ENCODE measurements at regions of chr13 and their contacts with region 1.

Region 1: DNA sequence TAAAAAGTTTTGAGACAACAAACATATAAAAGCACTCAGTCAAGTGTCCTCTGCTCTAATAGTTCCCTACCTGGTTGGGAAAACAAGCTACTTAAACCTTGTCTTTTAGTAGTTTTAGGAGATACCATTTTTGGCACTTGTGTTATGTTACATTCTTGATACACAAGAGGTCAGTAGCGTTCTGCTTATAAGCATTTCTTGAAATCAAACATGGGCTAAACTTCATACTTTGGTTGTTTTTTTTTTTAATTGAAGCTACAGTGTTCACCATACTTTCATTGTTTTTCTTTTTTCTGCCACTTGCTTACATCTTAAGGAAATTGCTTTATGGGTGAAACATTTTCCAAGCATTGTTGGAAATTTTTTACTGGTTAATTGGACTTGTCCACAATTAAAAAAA is 12.9 kb downstream of the NHLRC3 start:
- DNase-seq: no peak
- ATAC-seq: peak in 1 of 4 donors; percentile 41
- H3K4me3 ChIP-seq: no peak overlapping the region
- H3K27ac ChIP-seq: no peak overlapping the region
- H3K4me1 ChIP-seq: no peaks in the 10 kb centered on the region
- H3K27me3 ChIP-seq: no peaks in the 10 kb centered on the region
- CTCF ChIP-seq: peak; percentile 18 to 73 (median 55)
- POLR2A ChIP-seq: no peak

Region 2: GRCh38 chr13:38933777-38934176 is 117.4 kb before region 1 on chr13:
- intact Hi-C with region 1: no loop called
- DNase-seq: no peak
- ATAC-seq: no peak
- H3K4me3 ChIP-seq: no peak overlapping the region
- H3K27ac ChIP-seq: no peak overlapping the region
- H3K4me1 ChIP-seq: no peaks in the 10 kb centered on the region
- H3K27me3 ChIP-seq: peaks cover 0 to 6% (median 0%) of the 10 kb centered on the region in 9 donors
- CTCF ChIP-seq: no peak
- POLR2A ChIP-seq: no peak

Region 3: GRCh38 chr13:39144941-39145533 is 93.9 kb after region 1 on chr13:
- intact Hi-C with region 1: loop called in 1 of 10 experiments (anchors 10 kb)
- DNase-seq: peak in 4 of 5 donors; percentile 47 to 65 (median 62)
- ATAC-seq: peak; percentile 57 to 77 (median 74)
- H3K4me3 ChIP-seq: peak overlapping the region in 7 of 12 donors; percentile 13 to 52 (median 21)
- H3K27ac ChIP-seq: peak overlapping the region in 6 of 12 donors; percentile 1 to 47 (median 23)
- H3K4me1 ChIP-seq: peaks cover 0 to 20% (median 0%) of the 10 kb centered on the region in 12 donors
- H3K27me3 ChIP-seq: no peaks in the 10 kb centered on the region
- CTCF ChIP-seq: peak; percentile 62 to 91 (median 84)
- POLR2A ChIP-seq: no peak

Region 4: GRCh38 chr13:39676315-39676876 is 625.2 kb after region 1 on chr13:
- intact Hi-C with region 1: loop called (anchors 2 to 10 kb)
- DNase-seq: no peak
- ATAC-seq: peak in 1 of 4 donors; percentile 41
- H3K4me3 ChIP-seq: peak overlapping the region in 1 of 12 donors; percentile 13
- H3K27ac ChIP-seq: no peak overlapping the region
- H3K4me1 ChIP-seq: peaks cover 0 to 9% (median 0%) of the 10 kb centered on the region in 12 donors
- H3K27me3 ChIP-seq: no peaks in the 10 kb centered on the region
- CTCF ChIP-seq: peak; percentile 34 to 70 (median 58)
- POLR2A ChIP-seq: no peak

Measured in heart left ventricle (tissue), 16 donors.